Gastrocnemius medialis (tissue), 4 donors: ENCODE measurements at regions of chr12 and their contacts with region 1.

Region 1: GRCh38 chr12:125183187-125184067 is 118.2 kb downstream of the AACS start:
- DNase-seq: peak; percentile 26 to 34
- ATAC-seq: peak; percentile 41 to 67
- H3K4me3 ChIP-seq: no peak overlapping the region
- H3K27ac ChIP-seq: no peak overlapping the region
- H3K4me1 ChIP-seq: peaks cover 7 to 17% of the 10 kb centered on the region in 2 donors
- H3K27me3 ChIP-seq: peaks cover 10 to 22% (median 16%) of the 10 kb centered on the region in 3 donors
- CTCF ChIP-seq: peak; percentile 81 to 99 (median 93)
- POLR2A ChIP-seq: no peak

Region 2: DNA sequence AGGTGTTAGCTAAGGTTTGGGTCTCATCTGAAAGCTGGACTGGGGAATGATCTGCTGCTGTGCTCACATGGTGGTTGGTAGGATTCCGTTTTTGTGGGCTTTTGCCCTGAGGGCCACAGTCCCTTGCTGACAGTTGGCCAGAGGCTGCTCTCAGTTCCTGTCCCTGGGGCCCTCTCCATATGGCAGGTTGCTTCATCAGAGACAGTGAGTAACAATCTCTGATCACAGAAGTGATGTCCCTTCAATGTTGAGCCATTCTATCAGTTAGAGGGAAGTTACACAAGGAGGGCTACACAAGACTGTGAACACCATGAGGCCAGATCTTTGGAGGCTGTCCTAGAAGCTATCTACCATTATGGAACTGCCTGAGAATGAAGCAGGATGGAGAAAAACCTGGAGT is 19.0 kb after region 1 on chr12:
- in situ Hi-C with region 1: no loop called
- intact Hi-C with region 1: loop called (anchors 1 kb)
- DNase-seq: no peak
- ATAC-seq: no peak
- H3K4me3 ChIP-seq: no peak overlapping the region
- H3K27ac ChIP-seq: no peak overlapping the region
- H3K4me1 ChIP-seq: no peaks in the 10 kb centered on the region
- H3K27me3 ChIP-seq: peaks cover 0 to 3% (median 0%) of the 10 kb centered on the region in 3 donors
- CTCF ChIP-seq: no peak
- POLR2A ChIP-seq: no peak

Region 3: DNA sequence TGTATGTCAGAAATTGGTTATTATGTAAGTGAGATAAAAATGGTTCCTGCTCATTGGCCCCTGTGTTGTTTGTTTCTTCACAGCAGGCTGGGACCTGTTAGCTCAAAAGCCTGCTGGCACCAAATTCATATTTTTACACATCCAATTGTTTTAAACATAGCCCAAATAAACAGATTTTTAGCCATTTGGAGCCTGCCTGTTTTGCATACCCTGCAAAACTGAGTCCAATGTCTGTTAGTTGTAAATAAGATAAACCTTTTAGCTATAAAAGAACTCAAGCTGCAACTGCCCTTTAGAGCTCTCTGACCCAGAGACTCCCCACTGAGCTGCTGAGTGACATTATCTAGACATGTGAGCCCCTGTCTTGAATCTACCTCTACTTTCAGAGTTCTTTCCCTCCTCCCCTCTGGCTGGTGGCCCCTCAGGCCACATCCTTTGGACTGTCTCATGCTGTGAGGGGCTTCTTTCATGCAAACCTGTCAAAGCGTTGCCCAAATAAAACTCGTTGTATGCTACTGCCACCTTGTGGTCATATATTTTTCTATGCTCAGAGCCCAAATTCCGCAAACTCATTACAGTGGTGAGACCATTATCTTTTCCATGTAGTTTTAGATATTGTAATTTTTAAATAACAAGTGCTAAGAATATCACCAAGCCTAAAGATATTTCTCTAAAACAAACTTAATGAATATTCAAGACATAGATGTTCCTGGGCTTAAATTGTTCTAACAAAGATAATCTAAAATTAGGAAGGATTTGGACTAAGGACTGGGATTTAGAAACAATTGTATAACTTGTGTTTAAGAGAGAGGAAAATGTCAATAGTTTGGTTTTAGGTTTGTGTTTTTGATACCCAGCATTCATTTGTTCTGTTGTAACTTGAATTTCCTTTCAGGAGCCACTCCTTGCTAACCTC is 219.7 kb after region 1 on chr12:
- in situ Hi-C with region 1: no loop called
- intact Hi-C with region 1: loop called (anchors 2 kb)
- DNase-seq: no peak
- ATAC-seq: no peak
- H3K4me3 ChIP-seq: no peak overlapping the region
- H3K27ac ChIP-seq: no peak overlapping the region
- H3K4me1 ChIP-seq: no peaks in the 10 kb centered on the region
- H3K27me3 ChIP-seq: no peaks in the 10 kb centered on the region
- CTCF ChIP-seq: peak in 4 of 5 experiments; percentile 14 to 47 (median 30)
- POLR2A ChIP-seq: no peak

Region 4: DNA sequence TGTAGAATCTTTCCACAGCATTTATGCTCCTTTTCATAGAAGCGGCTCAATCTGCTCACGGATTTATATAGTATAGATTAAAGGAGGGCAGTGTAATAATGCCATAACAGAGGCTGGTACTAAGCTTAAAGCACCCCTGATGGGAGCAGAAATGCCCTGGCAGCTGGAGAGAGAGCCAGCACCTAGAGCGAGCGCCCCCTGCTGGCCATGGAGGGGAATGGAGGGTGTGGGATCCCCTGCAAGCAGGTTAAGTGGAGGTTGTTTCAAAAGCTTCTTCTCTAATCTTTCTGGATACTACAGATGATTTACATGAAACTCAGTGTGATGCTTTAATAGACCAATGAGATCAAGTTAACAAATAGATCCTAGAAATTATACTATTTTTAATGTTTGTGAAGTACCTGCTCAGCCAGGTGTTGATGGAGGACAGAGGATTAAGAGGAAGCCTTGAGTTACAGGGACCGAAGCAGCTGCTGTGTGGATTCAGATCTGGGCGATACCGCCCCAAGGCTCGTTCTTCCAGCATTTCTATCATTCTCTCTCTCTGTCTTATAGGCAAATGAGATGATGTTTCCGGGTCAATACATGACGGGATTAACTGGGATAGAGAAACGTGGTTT is 1564.2 kb after region 1 on chr12:
- in situ Hi-C with region 1: no loop called
- intact Hi-C with region 1: loop called (anchors 5 kb)
- DNase-seq: no peak
- ATAC-seq: no peak
- H3K4me3 ChIP-seq: no peak overlapping the region
- H3K27ac ChIP-seq: no peak overlapping the region
- H3K4me1 ChIP-seq: no peaks in the 10 kb centered on the region
- H3K27me3 ChIP-seq: no peaks in the 10 kb centered on the region
- CTCF ChIP-seq: peak; percentile 23 to 70 (median 40)
- POLR2A ChIP-seq: no peak

Region 5: DNA sequence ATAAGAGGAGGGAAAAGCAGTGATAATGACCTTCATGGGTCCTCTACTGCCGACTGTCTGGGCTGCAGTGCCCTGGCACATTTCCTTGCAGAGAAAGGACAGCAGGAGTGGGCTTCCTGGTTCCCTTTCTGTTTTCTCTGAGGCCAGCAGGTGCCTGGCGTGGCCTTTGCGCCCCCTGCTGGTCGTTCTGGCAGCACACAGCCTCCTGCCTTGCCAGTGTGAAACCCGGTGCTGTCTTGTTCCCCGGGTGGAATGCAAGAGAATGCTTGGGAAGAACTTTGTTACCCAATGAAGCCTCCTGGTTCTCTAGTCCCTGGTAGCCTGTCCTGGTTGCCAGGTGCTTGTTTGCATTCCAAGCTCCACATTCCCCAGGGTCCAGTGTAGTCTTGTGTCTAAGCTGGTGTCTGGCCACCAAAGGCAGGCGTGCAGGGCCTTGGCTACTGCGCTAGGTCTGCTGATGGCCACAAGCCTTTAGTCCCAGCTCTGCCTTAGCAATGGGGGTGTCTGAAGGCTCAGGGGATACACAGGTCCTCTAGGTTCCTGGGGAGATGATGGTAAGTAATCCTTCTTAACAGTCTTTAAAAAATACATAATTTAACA is 1691.1 kb after region 1 on chr12:
- in situ Hi-C with region 1: no loop called
- intact Hi-C with region 1: loop called (anchors 2 kb)
- DNase-seq: peak in 1 of 2 donors; percentile 2
- ATAC-seq: no peak
- H3K4me3 ChIP-seq: no peak overlapping the region
- H3K27ac ChIP-seq: no peak overlapping the region
- H3K4me1 ChIP-seq: no peaks in the 10 kb centered on the region
- H3K27me3 ChIP-seq: no peaks in the 10 kb centered on the region
- CTCF ChIP-seq: peak; percentile 26 to 73 (median 45)
- POLR2A ChIP-seq: no peak